ENCODE measurements at regions of chrX and their contacts with region 1.

Region 1: GRCh38 chrX:42869659-42870476 is 91.9 kb upstream of the PPP1R2C start:
- DNase-seq: peak; percentile 47
- ATAC-seq: peak; percentile 69
- H3K4me3 ChIP-seq: no peak overlapping the region
- H3K4me3 Mint-ChIP-seq: no peak overlapping the region
- H3K27ac ChIP-seq: peak overlapping the region in 1 of 2 donors; percentile 11
- H3K27ac Mint-ChIP-seq: peak overlapping the region; percentile 56
- H3K4me1 ChIP-seq: peaks cover 15 to 16% of the 10 kb centered on the region in 2 donors
- H3K4me1 Mint-ChIP-seq: peaks cover 22% of the 10 kb centered on the region
- H3K27me3 ChIP-seq: no peaks in the 10 kb centered on the region
- H3K27me3 Mint-ChIP-seq: no peaks in the 10 kb centered on the region
- CTCF ChIP-seq: no peak

Region 2: GRCh38 chrX:42886519-42886918 is 16.7 kb after region 1 on chrX:
- CTCF ChIA-PET with region 1: no interaction called
- POLR2A ChIA-PET with region 1: no interaction called
- intact Hi-C with region 1: no loop called
- DNase-seq: no peak
- ATAC-seq: no peak
- H3K4me3 ChIP-seq: no peak overlapping the region
- H3K4me3 Mint-ChIP-seq: no peak overlapping the region
- H3K27ac ChIP-seq: no peak overlapping the region
- H3K27ac Mint-ChIP-seq: no peak overlapping the region
- H3K4me1 ChIP-seq: no peaks in the 10 kb centered on the region
- H3K4me1 Mint-ChIP-seq: no peaks in the 10 kb centered on the region
- H3K27me3 ChIP-seq: no peaks in the 10 kb centered on the region
- H3K27me3 Mint-ChIP-seq: no peaks in the 10 kb centered on the region
- CTCF ChIP-seq: no peak

Region 3: GRCh38 chrX:42934020-42934726 is 64.3 kb after region 1 on chrX:
- CTCF ChIA-PET with region 1: no interaction called
- POLR2A ChIA-PET with region 1: no interaction called
- intact Hi-C with region 1: loop called (anchors 10 kb)
- DNase-seq: peak; percentile 57
- ATAC-seq: peak; percentile 90
- H3K4me3 ChIP-seq: peak overlapping the region in 2 of 5 experiments; percentile 6 to 7
- H3K4me3 Mint-ChIP-seq: peak overlapping the region; percentile 71
- H3K27ac ChIP-seq: peak overlapping the region; percentile 58 to 63
- H3K27ac Mint-ChIP-seq: peak overlapping the region; percentile 94
- H3K4me1 ChIP-seq: peaks cover 24 to 31% of the 10 kb centered on the region in 2 donors
- H3K4me1 Mint-ChIP-seq: peaks cover 41% of the 10 kb centered on the region
- H3K27me3 ChIP-seq: no peaks in the 10 kb centered on the region
- H3K27me3 Mint-ChIP-seq: no peaks in the 10 kb centered on the region
- CTCF ChIP-seq: no peak

Region 4: GRCh38 chrX:43604753-43605152 is 734.9 kb after region 1 on chrX:
- CTCF ChIA-PET with region 1: no interaction called
- POLR2A ChIA-PET with region 1: no interaction called
- intact Hi-C with region 1: no loop called
- DNase-seq: no peak
- ATAC-seq: no peak
- H3K4me3 ChIP-seq: no peak overlapping the region
- H3K4me3 Mint-ChIP-seq: no peak overlapping the region
- H3K27ac ChIP-seq: no peak overlapping the region
- H3K27ac Mint-ChIP-seq: no peak overlapping the region
- H3K4me1 ChIP-seq: no peaks in the 10 kb centered on the region
- H3K4me1 Mint-ChIP-seq: no peaks in the 10 kb centered on the region
- H3K27me3 ChIP-seq: no peaks in the 10 kb centered on the region
- H3K27me3 Mint-ChIP-seq: no peaks in the 10 kb centered on the region
- CTCF ChIP-seq: no peak